ENCODE measurements at regions of chr4 and their contacts with region 1.

Region 1: DNA sequence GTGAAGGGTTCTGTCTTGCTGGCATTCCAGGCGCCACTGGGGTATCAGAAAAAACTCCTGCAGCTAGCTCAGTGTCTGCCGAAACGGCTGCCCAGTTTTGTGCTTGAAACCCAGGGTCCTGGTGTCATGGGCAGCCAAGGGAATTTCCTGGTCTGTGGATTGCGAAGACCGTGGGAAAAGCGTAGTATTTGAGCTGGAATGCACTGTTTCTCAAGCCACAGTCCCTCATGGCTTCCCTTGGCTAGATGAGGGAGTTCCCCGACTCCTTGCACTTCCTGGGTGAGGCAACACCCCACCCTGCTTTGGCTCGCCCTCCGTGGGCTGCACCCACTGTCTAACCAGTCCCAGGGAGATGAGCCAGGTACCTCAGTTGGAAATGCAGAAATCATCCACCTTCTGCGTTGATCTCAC is 40.1 kb downstream of the NOP14 start:
- DNase-seq: peak in 1 of 3 donors; percentile 16
- ATAC-seq: no peak
- H3K4me3 ChIP-seq: no peak overlapping the region
- H3K27ac ChIP-seq: no peak overlapping the region
- H3K4me1 ChIP-seq: no peaks in the 10 kb centered on the region
- H3K27me3 ChIP-seq: no peaks in the 10 kb centered on the region

Region 2: DNA sequence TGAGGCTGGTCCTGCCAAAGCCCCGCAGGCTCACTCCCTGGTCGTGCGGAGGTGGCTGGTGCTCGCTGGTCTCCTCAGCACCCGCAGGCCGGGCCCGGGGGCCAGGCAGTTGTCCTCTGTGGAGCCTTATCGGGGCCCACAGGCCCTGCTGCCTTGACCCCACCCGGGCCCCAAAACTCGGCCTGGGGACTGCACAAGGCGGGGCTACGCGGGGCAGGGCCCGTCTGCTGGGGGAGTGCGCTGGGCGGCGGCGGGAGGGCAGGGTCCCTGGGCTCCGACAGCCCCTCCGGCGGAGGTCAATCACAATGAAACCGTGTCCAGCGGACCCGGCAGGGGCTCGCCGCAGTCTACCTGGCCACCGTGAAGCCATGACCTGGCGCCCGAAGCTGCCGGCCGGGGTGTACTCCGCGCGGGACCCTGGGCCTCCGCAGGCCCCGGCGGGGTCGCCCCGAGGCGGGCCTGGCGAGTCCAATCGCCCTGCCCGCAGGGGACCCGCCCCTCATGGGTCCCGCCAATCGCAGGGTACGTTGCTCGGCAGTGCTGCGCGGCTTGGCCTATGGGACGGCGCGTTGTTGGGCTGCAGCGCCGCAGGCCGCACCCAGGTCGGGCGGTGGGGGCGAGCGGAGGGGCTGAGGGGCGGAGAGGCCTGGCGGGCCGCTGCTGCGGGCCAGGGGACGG is 79.7 kb before region 1 on chr4 and contains the start of gene ADD1:
- intact Hi-C with region 1: loop called in 1 of 4 experiments (anchors 10 kb)
- DNase-seq: peak; percentile 89 to 97 (median 96)
- ATAC-seq: peak; percentile 99
- H3K4me3 ChIP-seq: peak within 1 kb of the TSS; percentile 99
- H3K27ac ChIP-seq: peak within 1 kb of the TSS; percentile 90
- H3K4me1 ChIP-seq: no peaks in the 10 kb centered on the region
- H3K27me3 ChIP-seq: no peaks in the 10 kb centered on the region
- total RNA-seq, gene ADD1: 215 to 256 (median 236) TPM

Region 3: GRCh38 chr4:2862528-2862927 is 60.6 kb before region 1 on chr4:
- intact Hi-C with region 1: loop called in 1 of 4 experiments (anchors 10 kb)
- DNase-seq: no peak
- ATAC-seq: peak; percentile 11 to 30
- H3K4me3 ChIP-seq: peak overlapping the region; percentile 23
- H3K27ac ChIP-seq: peak overlapping the region; percentile 21
- H3K4me1 ChIP-seq: peaks cover 28% of the 10 kb centered on the region
- H3K27me3 ChIP-seq: no peaks in the 10 kb centered on the region

Measured in right cardiac atrium (tissue), 5 donors.